H1 (cell line): ENCODE measurements at regions of chr3 and their contacts with region 1.

Region 1: GRCh38 chr3:179653096-179653797 is 407 bp downstream of the USP13 start:
- DNase-seq: peak in 1 of 2 experiments; percentile 82
- H3K4me3 ChIP-seq: peak overlapping the region; percentile 62 to 97 (median 84)
- H3K27ac ChIP-seq: peak overlapping the region; percentile 81
- H3K4me1 ChIP-seq: peaks cover 3 to 8% (median 5%) of the 10 kb centered on the region in 4 experiments; a peak in 6 of 7 replicates
- H3K27me3 ChIP-seq: no peaks in the 10 kb centered on the region
- CTCF ChIP-seq: peak in 1 of 3 experiments; percentile 14; a peak in 1 of 4 replicates
- EP300 ChIP-seq: no peak
- POLR2A ChIP-seq: peak in 1 of 2 experiments; percentile 69; a peak in 2 of 3 replicates
- RAD21 ChIP-seq: peak; percentile 33 to 37; a peak in 3 of 4 replicates

Region 2: GRCh38 chr3:179580992-179581391 is 72.3 kb before region 1 on chr3:
- CTCF ChIA-PET with region 1: no interaction called
- POLR2A ChIA-PET with region 1: no interaction called
- DNase-seq: no peak
- H3K4me3 ChIP-seq: no peak overlapping the region
- H3K27ac ChIP-seq: no peak overlapping the region
- H3K4me1 ChIP-seq: no peaks in the 10 kb centered on the region
- H3K27me3 ChIP-seq: no peaks in the 10 kb centered on the region
- CTCF ChIP-seq: no peak
- EP300 ChIP-seq: no peak
- POLR2A ChIP-seq: no peak
- RAD21 ChIP-seq: no peak

Region 3: DNA sequence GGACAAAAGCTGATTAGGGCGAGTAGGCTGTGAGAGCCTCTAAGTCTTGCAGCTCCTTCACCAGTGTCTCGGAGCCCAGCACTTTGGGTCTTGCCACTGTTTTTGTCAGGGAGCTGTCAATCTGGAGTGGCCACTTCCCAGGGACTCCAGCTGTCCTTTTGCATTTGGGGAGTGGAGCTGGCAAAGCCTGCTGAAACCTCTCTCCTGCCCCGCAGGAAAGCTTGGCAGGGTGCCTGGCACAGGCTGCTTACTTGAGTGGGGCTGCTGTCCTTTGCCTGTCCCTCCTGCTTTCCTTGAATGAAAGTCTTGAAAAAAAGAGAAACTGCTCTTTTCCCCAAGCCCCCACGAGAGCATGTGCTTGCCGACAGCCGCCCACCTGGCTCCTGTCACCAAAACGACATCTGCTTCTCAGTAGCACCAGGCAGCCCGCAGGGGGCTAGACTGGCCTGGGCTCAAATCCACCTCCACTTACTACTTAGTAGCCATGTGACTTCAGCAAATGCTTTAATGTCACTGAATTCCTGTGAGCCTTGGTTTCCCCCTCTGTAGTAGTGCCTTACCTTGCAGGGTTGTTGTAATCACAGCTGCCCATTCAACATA is 13.3 kb after region 1 on chr3:
- CTCF ChIA-PET with region 1: interaction called, 29 read pairs
- POLR2A ChIA-PET with region 1: interaction called, 11 read pairs
- DNase-seq: peak in 1 of 2 experiments; percentile 59
- H3K4me3 ChIP-seq: no peak overlapping the region
- H3K27ac ChIP-seq: no peak overlapping the region
- H3K4me1 ChIP-seq: peaks cover 8 to 13% (median 10%) of the 10 kb centered on the region in 4 experiments
- H3K27me3 ChIP-seq: no peaks in the 10 kb centered on the region
- CTCF ChIP-seq: no peak
- EP300 ChIP-seq: no peak
- POLR2A ChIP-seq: no peak
- RAD21 ChIP-seq: 0 out of 4 replicates have a peak, but pooled peaks of 1 of the 2 experiments have one; percentile 14

Region 4: DNA sequence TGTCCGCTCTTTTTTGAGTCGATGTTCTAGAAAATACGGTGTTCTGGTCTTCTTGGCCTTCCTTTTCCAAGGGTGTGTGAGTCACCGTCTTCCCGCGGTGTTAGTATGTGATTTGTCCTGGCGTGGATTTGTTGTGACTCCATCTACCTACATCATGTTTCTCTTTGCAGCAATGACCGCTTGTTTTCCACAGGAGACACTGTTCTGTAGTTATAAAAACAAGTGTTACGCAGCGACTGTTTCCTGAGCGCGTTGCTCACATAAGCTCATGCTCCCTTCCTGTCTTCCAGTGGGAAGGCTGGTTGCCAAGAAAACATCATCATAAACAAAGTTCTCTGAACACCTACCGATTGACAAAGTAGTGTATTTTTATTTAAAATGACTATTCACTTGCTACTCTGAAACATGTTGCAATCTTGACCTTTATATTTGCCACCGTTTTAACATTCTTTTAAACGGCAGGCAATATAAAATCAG is 18.5 kb after region 1 on chr3:
- CTCF ChIA-PET with region 1: interaction called, 11 read pairs
- POLR2A ChIA-PET with region 1: interaction called, 11 read pairs
- DNase-seq: no peak
- H3K4me3 ChIP-seq: no peak overlapping the region
- H3K27ac ChIP-seq: no peak overlapping the region
- H3K4me1 ChIP-seq: peaks cover 2 to 6% (median 3%) of the 10 kb centered on the region in 4 experiments; a peak in 5 of 7 replicates
- H3K27me3 ChIP-seq: no peaks in the 10 kb centered on the region
- CTCF ChIP-seq: no peak
- EP300 ChIP-seq: no peak
- POLR2A ChIP-seq: no peak
- RAD21 ChIP-seq: no peak

Region 5: GRCh38 chr3:179745079-179745478 is 91.8 kb after region 1 on chr3:
- CTCF ChIA-PET with region 1: no interaction called
- POLR2A ChIA-PET with region 1: no interaction called
- DNase-seq: no peak
- H3K4me3 ChIP-seq: no peak overlapping the region
- H3K27ac ChIP-seq: no peak overlapping the region
- H3K4me1 ChIP-seq: peaks cover 0 to 7% (median 3%) of the 10 kb centered on the region in 4 experiments; a peak in 2 of 7 replicates
- H3K27me3 ChIP-seq: no peaks in the 10 kb centered on the region
- CTCF ChIP-seq: no peak
- EP300 ChIP-seq: no peak
- POLR2A ChIP-seq: no peak
- RAD21 ChIP-seq: no peak

Region 6: DNA sequence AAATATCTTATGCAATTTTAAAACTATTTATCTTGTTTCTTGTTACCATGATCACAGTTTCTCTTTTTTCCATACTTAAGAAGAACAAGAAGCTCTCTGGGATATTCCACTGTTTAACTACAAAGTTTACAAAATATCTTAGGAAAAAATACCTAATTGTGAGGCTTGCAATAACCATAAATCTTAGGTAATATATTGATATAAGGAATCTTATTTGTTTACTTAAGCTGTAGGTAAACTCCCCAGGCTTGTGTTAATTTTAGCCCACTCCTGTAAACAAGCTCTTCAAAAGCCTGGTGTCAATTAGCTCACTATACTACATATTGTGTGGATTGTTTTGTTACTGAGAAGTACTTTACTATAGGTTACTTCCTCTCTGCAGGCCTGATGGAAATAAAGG is 481.4 kb after region 1 on chr3:
- CTCF ChIA-PET with region 1: no interaction called
- POLR2A ChIA-PET with region 1: no interaction called
- DNase-seq: no peak
- H3K4me3 ChIP-seq: no peak overlapping the region
- H3K27ac ChIP-seq: no peak overlapping the region
- H3K4me1 ChIP-seq: peaks cover 0 to 9% (median under 1%) of the 10 kb centered on the region in 4 experiments; a peak in 1 of 7 replicates
- H3K27me3 ChIP-seq: no peaks in the 10 kb centered on the region
- CTCF ChIP-seq: no peak
- EP300 ChIP-seq: no peak
- POLR2A ChIP-seq: no peak
- RAD21 ChIP-seq: no peak